Psoas muscle (tissue), 8 donors: ENCODE measurements at regions of chr5 and their contacts with region 1.

Region 1: DNA sequence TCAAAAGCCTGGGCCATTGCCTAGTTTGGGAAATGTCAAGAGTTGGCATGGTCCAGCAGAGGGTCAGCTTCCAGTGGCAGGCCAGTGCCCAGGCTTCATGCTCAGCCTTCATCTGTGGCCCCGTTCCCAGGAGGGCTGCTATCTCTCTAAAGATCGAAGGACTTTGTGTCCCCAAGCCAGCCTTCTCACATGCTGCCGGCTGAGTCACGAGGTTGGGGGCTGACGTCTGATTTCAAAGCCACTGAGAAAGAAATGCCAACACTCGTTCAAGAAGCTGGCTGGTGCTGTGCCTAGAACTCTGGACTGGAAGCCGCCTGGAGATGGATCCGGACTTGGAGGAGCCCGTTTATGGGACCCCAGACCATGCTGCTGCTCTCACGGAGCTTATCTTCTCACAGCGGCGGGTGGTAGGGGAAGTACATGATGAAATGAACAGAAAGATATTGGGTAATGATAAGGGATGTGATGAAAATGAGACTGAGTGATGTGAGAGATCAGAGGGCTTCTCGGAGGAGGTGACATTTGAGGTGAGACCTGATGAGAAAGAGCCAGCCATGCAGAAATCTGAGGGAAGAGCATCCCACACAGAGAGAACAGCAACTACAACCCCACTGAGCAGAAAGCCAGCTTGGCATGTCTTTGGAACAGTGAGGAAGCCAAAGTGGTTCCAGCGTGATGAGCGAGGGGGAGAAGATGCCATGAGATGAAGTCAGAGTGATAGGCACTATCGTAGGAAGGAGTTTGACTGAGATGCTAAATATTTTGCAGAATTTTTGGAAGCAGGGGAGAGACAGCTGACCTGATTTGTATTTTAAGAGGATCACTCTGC is 54.9 kb upstream of the BOD1 start:
- DNase-seq: peak; percentile 84 to 93
- ATAC-seq: peak; percentile 85 to 93 (median 90)
- H3K4me3 ChIP-seq: peak overlapping the region; percentile 46
- H3K27ac ChIP-seq: peak overlapping the region; percentile 62
- H3K4me1 ChIP-seq: peaks cover 22% of the 10 kb centered on the region
- H3K27me3 ChIP-seq: no peaks in the 10 kb centered on the region
- CTCF ChIP-seq: no peak

Region 2: DNA sequence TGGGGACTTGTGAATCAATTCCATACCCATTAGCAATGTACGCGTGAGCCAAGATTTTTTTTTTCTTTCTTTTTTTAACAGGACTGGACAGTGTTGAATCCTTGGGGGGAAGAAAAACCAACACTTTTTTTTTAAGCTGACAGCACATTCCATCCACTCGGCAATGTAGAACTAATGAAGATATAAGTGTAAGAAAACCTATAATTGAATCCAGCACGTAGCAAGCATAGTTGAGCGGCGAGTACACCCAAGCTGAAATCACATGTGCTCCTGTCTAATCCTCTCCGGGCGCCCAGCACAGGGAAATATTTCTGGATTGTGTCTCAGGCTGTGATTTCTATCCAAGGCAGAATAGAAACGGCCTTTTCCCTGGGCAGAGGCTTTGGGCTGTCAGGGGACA is 173.0 kb before region 1 on chr5:
- intact Hi-C with region 1: no loop called
- DNase-seq: peak; percentile 22 to 70
- ATAC-seq: peak; percentile 56 to 80 (median 74)
- H3K4me3 ChIP-seq: peak overlapping the region; percentile 33
- H3K27ac ChIP-seq: peak overlapping the region; percentile 87
- H3K4me1 ChIP-seq: peaks cover 59% of the 10 kb centered on the region
- H3K27me3 ChIP-seq: no peaks in the 10 kb centered on the region
- CTCF ChIP-seq: no peak

Region 3: DNA sequence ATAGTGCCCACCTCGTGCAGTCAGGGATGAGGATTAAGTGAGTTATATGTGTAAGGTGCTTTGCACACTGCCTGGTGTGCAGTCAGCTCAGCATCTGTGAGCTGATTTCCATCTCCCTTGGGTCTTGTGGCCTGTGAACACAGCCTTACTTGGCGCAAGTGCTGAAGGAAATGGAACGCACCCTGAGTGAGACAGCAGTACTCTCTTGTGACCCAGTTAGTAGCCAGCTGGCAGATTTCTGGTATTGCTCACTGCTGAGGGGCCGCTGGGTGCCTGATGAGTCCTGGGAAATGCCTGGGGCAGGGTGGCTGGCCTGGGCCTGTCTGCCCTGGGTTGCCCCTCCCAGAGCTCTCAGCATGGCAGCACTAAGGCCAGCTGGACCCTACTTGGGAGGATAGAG is 36.1 kb after region 1 on chr5:
- intact Hi-C with region 1: loop called in 1 of 2 experiments (anchors 5 kb)
- DNase-seq: peak; percentile 81 to 92
- ATAC-seq: peak; percentile 95 to 98 (median 96)
- H3K4me3 ChIP-seq: no peak overlapping the region
- H3K27ac ChIP-seq: peak overlapping the region; percentile 82
- H3K4me1 ChIP-seq: peaks cover 20% of the 10 kb centered on the region
- H3K27me3 ChIP-seq: no peaks in the 10 kb centered on the region
- CTCF ChIP-seq: no peak

Region 4: DNA sequence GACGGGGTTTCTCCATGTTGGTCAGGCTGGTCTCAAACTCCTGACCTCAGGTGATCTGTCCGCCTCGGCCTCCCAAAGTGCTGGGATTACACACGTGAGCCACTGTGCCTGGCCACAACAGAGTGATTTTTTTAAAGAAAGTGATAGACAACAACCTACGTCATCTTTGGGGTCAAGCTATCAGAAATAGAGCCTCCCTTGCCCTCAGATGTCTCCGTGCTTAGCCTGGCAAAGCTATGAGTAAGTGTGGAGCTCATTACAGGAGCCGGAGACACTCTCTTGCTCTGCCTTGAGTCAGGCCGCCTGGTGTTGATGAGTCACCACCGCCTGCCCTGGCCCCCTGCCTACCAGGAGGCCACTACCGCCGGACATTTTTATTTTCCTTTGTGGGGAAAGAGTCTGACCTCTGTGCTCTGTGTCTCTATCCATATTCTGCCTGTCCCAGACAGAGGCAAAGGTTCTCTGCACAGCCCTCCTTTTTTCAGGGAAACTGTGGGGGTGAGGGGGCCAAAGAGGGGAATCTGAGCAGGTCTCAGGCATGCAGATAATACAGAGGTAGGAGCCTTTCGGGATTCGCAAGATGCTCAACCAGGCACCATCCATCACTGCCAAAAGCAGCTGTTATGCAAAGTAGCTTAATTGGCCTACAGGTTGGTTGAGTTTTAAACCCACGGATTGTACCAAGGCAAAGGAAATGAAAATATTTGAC is 93.1 kb after region 1 on chr5:
- intact Hi-C with region 1: loop called in 1 of 2 experiments (anchors 5 kb)
- DNase-seq: peak; percentile 88 to 95
- ATAC-seq: peak; percentile 74 to 81 (median 79)
- H3K4me3 ChIP-seq: no peak overlapping the region
- H3K27ac ChIP-seq: peak overlapping the region; percentile 86
- H3K4me1 ChIP-seq: peaks cover 45% of the 10 kb centered on the region
- H3K27me3 ChIP-seq: no peaks in the 10 kb centered on the region
- CTCF ChIP-seq: no peak